Ovary (tissue), 10 donors: ENCODE measurements at regions of chr17 and their contacts with region 1.

Region 1: GRCh38 chr17:50161023-50161910 is 4.5 kb upstream of the SGCA start:
- DNase-seq: peak; percentile 93 to 97 (median 95)
- H3K4me3 ChIP-seq: peak overlapping the region; percentile 49
- H3K27ac ChIP-seq: peak overlapping the region; percentile 68 to 79
- H3K4me1 ChIP-seq: no peaks in the 10 kb centered on the region
- H3K27me3 ChIP-seq: no peaks in the 10 kb centered on the region
- CTCF ChIP-seq: peak; percentile 98 to 99 (median 98)
- EP300 ChIP-seq: no peak
- POLR2A ChIP-seq: peak; percentile 61

Region 2: DNA sequence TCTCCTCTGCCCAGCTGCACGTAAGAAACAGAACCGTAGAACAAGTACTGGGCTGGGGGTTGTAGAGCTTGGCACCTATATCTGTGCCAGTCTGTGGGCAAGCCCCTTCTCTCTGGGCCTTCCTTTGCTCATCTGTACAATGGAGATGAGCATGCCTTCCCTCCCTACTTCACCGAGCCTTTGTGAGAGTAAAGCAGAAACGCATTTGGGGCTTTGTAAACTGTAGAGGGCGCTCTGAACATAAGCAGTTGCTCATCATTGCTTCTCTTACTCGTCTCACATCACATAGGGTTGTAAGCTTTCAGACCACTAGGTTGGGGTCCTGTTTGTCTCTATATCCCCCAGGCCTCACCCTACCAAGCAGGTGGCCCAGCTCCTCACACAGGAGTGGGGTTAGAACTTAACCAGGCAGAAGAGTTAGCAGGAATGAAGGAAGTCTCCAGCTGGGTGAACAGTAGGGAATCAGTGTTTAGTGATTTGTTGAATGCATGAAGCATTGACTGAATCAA is 46.4 kb before region 1 on chr17:
- intact Hi-C with region 1: loop called in 1 of 4 experiments (anchors 10 kb)
- DNase-seq: no peak
- H3K4me3 ChIP-seq: no peak overlapping the region
- H3K27ac ChIP-seq: no peak overlapping the region
- H3K4me1 ChIP-seq: peaks cover 8% of the 10 kb centered on the region
- H3K27me3 ChIP-seq: no peaks in the 10 kb centered on the region
- CTCF ChIP-seq: peak in 1 of 3 donors; percentile 10
- EP300 ChIP-seq: no peak
- POLR2A ChIP-seq: no peak

Region 3: GRCh38 chr17:50139950-50140871 is 21.1 kb before region 1 on chr17:
- intact Hi-C with region 1: loop called in 1 of 4 experiments (anchors 1 kb)
- DNase-seq: peak; percentile 67 to 85 (median 81)
- H3K4me3 ChIP-seq: no peak overlapping the region
- H3K27ac ChIP-seq: peak overlapping the region; percentile 0 to 15
- H3K4me1 ChIP-seq: no peaks in the 10 kb centered on the region
- H3K27me3 ChIP-seq: no peaks in the 10 kb centered on the region
- CTCF ChIP-seq: peak; percentile 89 to 95 (median 92)
- EP300 ChIP-seq: no peak
- POLR2A ChIP-seq: no peak